ENCODE measurements at regions of chr6 and their contacts with region 1.

Region 1: DNA sequence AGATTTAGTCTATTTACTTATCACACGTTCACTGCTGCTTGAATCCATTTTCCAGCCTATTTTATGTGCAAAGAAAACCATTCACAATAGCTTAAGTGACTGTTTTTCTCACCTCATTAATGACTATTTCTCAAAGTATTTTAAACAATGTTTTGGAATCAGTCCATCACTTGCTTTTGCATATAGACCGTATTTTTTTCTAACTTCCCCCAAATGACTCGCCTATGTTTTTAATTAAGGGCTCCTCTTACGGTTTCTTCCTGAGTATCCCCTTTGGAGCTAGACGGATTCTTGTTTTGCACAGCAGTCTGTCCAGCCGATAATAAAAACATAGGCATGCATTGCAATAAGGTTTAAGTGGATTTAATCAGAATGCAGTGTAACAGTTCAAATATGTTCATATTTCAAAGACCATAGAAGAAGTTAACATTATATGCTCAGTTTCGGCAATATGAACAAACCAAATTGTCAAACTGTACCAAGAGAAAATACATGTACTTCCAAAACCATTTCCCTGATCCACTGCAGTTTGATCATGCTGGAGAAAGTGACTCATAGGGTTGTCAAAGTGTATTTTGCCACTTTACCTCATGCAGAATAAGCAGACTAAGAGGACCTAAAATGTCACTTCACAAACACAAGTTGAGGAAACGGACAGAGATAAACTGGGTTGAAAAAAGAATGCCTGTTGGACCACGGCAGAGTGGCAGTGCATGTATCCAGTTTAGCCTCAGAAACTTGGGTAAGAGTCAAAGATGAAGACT is 66.4 kb downstream of the HMGN3 start:
- DNase-seq: no peak
- ATAC-seq: no peak
- H3K4me3 ChIP-seq: no peak overlapping the region
- H3K27ac ChIP-seq: no peak overlapping the region
- H3K4me1 ChIP-seq: peaks cover 0 to 5% (median 0%) of the 10 kb centered on the region in 9 donors
- H3K27me3 ChIP-seq: no peaks in the 10 kb centered on the region
- CTCF ChIP-seq: no peak

Region 2: GRCh38 chr6:79203753-79204253 is 35.7 kb after region 1 on chr6:
- intact Hi-C with region 1: loop called in 1 of 10 experiments (anchors 2 kb)
- DNase-seq: no peak
- ATAC-seq: peak in 3 of 8 donors; percentile 47 to 66 (median 58)
- H3K4me3 ChIP-seq: no peak overlapping the region
- H3K27ac ChIP-seq: no peak overlapping the region
- H3K4me1 ChIP-seq: peaks cover 0 to 9% (median 0%) of the 10 kb centered on the region in 9 donors
- H3K27me3 ChIP-seq: no peaks in the 10 kb centered on the region
- CTCF ChIP-seq: no peak